ENCODE measurements at regions of chr6 and their contacts with region 1.

Region 1: DNA sequence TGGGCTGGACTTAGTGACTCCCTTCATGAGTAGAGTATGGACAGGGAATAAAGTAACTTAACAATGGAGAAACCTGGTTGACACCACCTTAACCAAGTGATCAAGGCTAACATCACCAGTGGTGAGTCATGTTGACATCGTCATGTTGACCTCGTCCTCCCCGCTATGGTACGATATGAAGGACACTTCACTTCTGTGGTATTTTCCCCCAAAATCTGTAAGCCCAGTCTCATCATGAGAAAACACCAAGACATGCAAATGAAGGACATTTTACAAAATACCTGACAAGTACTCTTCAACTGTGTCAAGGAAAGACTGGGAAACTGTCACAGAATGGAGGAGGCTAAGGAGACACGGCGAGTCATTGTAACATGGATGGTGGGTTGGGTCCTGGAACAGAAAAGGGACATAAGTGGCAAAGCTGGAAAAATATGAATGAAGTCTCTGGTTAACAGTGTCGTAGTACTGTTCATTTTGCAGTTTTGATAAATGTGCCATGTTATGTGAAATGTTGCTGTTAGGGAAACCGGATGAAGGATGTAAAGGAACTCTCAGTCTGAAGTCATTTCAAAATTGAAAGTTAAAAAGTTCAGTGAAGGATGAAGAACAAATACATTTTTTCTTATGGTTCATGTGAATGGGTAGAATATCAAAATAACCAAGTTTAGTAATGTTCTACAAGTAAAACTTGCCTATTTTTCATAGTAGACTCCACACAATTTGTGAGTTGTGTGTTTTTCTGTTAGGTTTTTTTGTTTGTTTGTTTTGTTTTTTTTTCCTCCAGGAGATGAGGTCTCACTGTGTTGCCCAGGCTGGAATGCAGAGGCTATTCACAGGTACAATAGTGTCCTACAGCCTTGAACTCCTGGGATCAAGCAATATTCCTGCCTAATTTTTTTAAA is 247.5 kb downstream of the TMEM242 start:
- DNase-seq: peak; percentile 4
- H3K4me3 Mint-ChIP-seq: peak overlapping the region; percentile 71
- H3K27ac Mint-ChIP-seq: peak overlapping the region; percentile 99
- H3K4me1 Mint-ChIP-seq: peaks cover 49% of the 10 kb centered on the region
- H3K27me3 Mint-ChIP-seq: no peaks in the 10 kb centered on the region

Region 2: GRCh38 chr6:156474507-156475120 is 601.2 kb before region 1 on chr6:
- intact Hi-C with region 1: no loop called
- DNase-seq: no peak
- H3K4me3 Mint-ChIP-seq: no peak overlapping the region
- H3K27ac Mint-ChIP-seq: no peak overlapping the region
- H3K4me1 Mint-ChIP-seq: no peaks in the 10 kb centered on the region
- H3K27me3 Mint-ChIP-seq: no peaks in the 10 kb centered on the region

Region 3: GRCh38 chr6:156976216-156977127 is 99.3 kb before region 1 on chr6:
- intact Hi-C with region 1: loop called (anchors 5 kb)
- DNase-seq: no peak
- H3K4me3 Mint-ChIP-seq: peak overlapping the region; percentile 76
- H3K27ac Mint-ChIP-seq: peak overlapping the region; percentile 64
- H3K4me1 Mint-ChIP-seq: peaks cover 57% of the 10 kb centered on the region
- H3K27me3 Mint-ChIP-seq: peaks cover 2% of the 10 kb centered on the region

Region 4: GRCh38 chr6:157054531-157054979 is 21.2 kb before region 1 on chr6:
- intact Hi-C with region 1: loop called (anchors 1 kb)
- DNase-seq: peak; percentile 35
- H3K4me3 Mint-ChIP-seq: peak overlapping the region; percentile 53
- H3K27ac Mint-ChIP-seq: peak overlapping the region; percentile 95
- H3K4me1 Mint-ChIP-seq: peaks cover 33% of the 10 kb centered on the region
- H3K27me3 Mint-ChIP-seq: no peaks in the 10 kb centered on the region

Region 5: GRCh38 chr6:157087974-157088373 is 12.2 kb after region 1 on chr6:
- intact Hi-C with region 1: loop called (anchors 1 kb)
- DNase-seq: no peak
- H3K4me3 Mint-ChIP-seq: no peak overlapping the region
- H3K27ac Mint-ChIP-seq: no peak overlapping the region
- H3K4me1 Mint-ChIP-seq: peaks cover 20% of the 10 kb centered on the region
- H3K27me3 Mint-ChIP-seq: no peaks in the 10 kb centered on the region

Region 6: DNA sequence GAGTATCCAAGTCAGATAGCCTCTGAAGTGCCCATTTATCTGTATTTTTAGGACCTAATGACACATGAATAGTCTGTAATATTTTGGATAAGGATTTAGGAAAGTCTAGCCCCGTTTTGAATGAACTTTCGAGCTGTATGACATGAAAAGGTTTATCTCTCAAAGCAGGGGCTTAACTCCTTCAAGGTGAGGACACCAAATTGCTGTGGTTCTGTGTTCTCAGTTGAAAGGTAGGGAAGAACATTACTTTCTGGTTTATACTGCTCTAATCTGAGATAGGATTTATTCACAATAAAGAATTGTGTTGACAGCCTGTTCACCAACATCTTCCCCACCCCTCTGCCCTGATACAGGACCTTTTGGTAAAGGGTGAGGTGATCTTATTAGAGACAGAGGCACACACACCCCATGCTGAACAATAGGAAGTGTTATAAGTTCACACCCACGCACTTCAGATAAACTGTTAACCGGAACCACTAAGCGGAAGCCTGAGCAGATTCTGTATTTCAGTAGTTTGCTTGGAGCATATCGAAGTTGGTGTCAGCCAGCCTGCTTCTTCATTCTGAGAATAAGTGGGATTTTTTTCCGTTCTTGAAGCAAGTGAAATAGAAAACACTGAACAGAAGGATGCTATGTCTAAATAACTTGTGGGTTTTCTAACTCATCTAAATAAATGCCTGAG is 24.3 kb after region 1 on chr6:
- intact Hi-C with region 1: loop called (anchors 1 kb)
- DNase-seq: peak; percentile 58
- H3K4me3 Mint-ChIP-seq: peak overlapping the region; percentile 63
- H3K27ac Mint-ChIP-seq: peak overlapping the region; percentile 86
- H3K4me1 Mint-ChIP-seq: peaks cover 57% of the 10 kb centered on the region
- H3K27me3 Mint-ChIP-seq: no peaks in the 10 kb centered on the region

Region 7: DNA sequence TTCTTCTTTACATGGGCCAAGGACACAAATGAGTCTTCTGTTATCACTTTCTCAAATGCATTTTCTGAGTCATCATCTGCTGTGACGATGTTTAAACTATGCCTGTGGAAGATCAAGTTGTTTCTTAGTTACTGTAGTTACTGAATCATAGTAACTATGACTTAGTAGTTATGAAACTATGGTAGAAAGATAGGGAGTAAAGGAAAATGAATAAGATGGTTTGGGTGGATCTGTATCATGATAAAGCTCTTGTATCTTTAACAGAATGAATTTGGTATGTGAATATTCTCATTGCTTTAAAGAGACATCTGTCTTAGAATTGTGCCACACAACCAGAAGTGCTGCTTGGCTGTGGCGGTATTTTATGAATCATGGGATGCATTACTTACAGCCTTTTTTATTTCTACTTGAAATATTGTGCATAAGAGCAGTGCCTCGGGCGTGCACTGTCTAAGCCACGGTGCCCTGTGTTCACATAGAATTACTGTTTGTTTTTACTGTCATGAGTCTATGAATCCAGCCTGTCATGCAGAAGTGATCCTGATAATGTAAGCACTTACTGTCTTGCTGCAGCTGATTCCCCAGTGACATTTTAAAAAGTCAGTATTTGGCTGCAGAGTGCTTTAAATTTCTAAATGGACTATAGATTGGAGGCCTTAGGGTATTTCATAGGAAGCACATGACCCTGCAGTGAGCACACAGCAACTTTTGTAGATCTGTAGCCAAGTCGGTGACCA is 32.3 kb after region 1 on chr6:
- intact Hi-C with region 1: loop called (anchors 1 kb)
- DNase-seq: no peak
- H3K4me3 Mint-ChIP-seq: no peak overlapping the region
- H3K27ac Mint-ChIP-seq: peak overlapping the region; percentile 73
- H3K4me1 Mint-ChIP-seq: peaks cover 55% of the 10 kb centered on the region
- H3K27me3 Mint-ChIP-seq: no peaks in the 10 kb centered on the region